ENCODE measurements at regions of chr20 and their contacts with region 1.

Region 1: GRCh38 chr20:4613718-4614620 is 107.7 kb upstream of the PRND start:
- DNase-seq: peak; percentile 23
- ATAC-seq: peak; percentile 90
- H3K4me3 Mint-ChIP-seq: peak overlapping the region; percentile 3
- H3K27ac Mint-ChIP-seq: peak overlapping the region; percentile 31
- H3K4me1 Mint-ChIP-seq: peaks cover 12% of the 10 kb centered on the region
- H3K27me3 Mint-ChIP-seq: no peaks in the 10 kb centered on the region
- CTCF ChIP-seq: no peak

Region 2: GRCh38 chr20:4720041-4720976 is 106.3 kb after region 1 on chr20:
- CTCF ChIA-PET with region 1: interaction called, 23 read pairs
- POLR2A ChIA-PET with region 1: no interaction called
- intact Hi-C with region 1: loop called (anchors 1 kb)
- DNase-seq: peak; percentile 64
- ATAC-seq: peak; percentile 97
- H3K4me3 Mint-ChIP-seq: peak overlapping the region; percentile 55
- H3K27ac Mint-ChIP-seq: peak overlapping the region; percentile 85
- H3K4me1 Mint-ChIP-seq: peaks cover 44% of the 10 kb centered on the region
- H3K27me3 Mint-ChIP-seq: no peaks in the 10 kb centered on the region
- CTCF ChIP-seq: peak; percentile 47

Region 3: GRCh38 chr20:4726710-4727397 is 112.9 kb after region 1 on chr20:
- CTCF ChIA-PET with region 1: interaction called, 17 read pairs
- POLR2A ChIA-PET with region 1: no interaction called
- intact Hi-C with region 1: no loop called
- DNase-seq: no peak
- ATAC-seq: peak; percentile 80
- H3K4me3 Mint-ChIP-seq: peak overlapping the region; percentile 61
- H3K27ac Mint-ChIP-seq: peak overlapping the region; percentile 89
- H3K4me1 Mint-ChIP-seq: peaks cover 19% of the 10 kb centered on the region
- H3K27me3 Mint-ChIP-seq: no peaks in the 10 kb centered on the region
- CTCF ChIP-seq: no peak